ENCODE measurements at regions of chr12 and their contacts with region 1.

Region 1: DNA sequence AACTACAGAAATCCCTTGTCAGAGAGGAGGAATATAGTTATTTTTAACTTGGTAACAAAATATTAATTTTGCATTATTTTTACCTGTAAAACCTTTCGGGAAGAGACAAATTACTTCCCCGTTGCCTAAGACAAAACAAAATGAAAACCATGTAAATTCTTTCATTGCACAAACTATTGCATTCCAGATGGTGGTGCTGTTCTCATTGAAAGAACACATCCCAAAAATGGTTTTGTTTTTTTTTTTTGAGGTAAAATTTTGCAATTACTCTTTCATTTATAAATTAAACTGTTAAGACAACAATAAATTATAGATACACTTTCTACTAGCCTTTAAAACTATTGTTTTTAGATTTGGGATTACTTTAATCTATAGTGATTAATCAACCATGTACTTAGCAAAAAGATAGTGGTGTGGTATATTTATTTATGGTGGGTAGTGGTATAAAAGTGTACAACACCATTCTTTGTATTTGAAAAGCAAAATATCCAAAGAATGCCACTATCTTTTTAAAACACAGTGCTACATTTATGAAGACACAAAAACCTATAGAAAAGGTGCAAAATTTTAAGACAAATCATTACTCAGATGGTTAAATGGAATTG is 115.5 kb downstream of the SLC38A1 start:
- DNase-seq: no peak
- ATAC-seq: no peak
- H3K4me3 Mint-ChIP-seq: no peak overlapping the region
- H3K27ac Mint-ChIP-seq: no peak overlapping the region
- H3K4me1 Mint-ChIP-seq: peaks cover 9% of the 10 kb centered on the region
- H3K27me3 Mint-ChIP-seq: peaks cover 4% of the 10 kb centered on the region

Region 2: DNA sequence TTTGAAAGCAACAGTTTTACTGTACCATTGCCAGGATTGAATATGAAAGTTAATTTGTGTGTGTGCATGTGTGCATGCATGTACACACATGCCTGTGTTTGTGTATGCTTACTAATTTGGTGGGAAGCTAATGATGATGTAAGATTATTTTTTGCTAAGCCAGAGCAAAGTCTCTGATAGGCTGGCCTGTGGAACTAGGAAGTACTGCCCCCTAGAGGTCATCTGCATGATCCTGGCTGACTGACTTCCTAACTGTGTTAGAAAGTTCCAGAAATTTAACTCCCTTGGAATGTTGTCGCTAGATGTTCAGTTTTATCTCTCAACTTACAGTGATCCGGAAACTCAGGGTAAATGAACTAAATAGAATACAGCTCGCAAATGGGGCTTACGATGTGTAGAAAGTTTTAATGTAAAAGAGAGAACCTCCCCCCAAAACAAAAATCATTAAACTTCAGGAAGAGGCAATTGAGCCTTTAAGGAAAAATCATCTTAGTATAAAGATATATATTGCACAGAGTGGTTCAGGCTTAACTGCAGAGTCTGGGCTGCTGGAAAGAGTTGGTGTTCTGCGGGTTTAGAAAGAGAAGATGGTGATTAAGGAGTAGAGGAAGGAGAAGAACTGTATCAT is 149.8 kb after region 1 on chr12:
- CTCF ChIA-PET with region 1: interaction called, 10 read pairs
- POLR2A ChIA-PET with region 1: no interaction called
- DNase-seq: peak; percentile 56
- ATAC-seq: peak; percentile 57
- H3K4me3 Mint-ChIP-seq: no peak overlapping the region
- H3K27ac Mint-ChIP-seq: no peak overlapping the region
- H3K4me1 Mint-ChIP-seq: no peaks in the 10 kb centered on the region
- H3K27me3 Mint-ChIP-seq: peaks cover 5% of the 10 kb centered on the region

Measured in activated CD8-positive, alpha-beta T cell treated with anti-CD3 and anti-CD28 coated beads, Interleukin-2, amount 10 ng/mL, durations not matched to agents 7 days and 5 days (primary cell).